Dendritic cell treated with granulocyte-macrophage colony-stimulating factor and Interleukin-4, amounts not matched to agents 40 ng/mL and 50 ng/mL, for 4 days (primary cell): ENCODE measurements at regions of chr3 and their contacts with region 1.

Region 1: GRCh38 chr3:141575879-141576743 is 89.3 kb downstream of the RASA2 start:
- H3K4me3 Mint-ChIP-seq: no peak overlapping the region
- H3K27ac Mint-ChIP-seq: no peak overlapping the region
- H3K4me1 Mint-ChIP-seq: peaks cover 5% of the 10 kb centered on the region
- H3K27me3 Mint-ChIP-seq: no peaks in the 10 kb centered on the region

Region 2: GRCh38 chr3:141192345-141192744 is 383.8 kb before region 1 on chr3:
- intact Hi-C with region 1: no loop called
- H3K4me3 Mint-ChIP-seq: no peak overlapping the region
- H3K27ac Mint-ChIP-seq: no peak overlapping the region
- H3K4me1 Mint-ChIP-seq: peaks cover 10% of the 10 kb centered on the region
- H3K27me3 Mint-ChIP-seq: peaks cover 22% of the 10 kb centered on the region

Region 3: GRCh38 chr3:141561426-141562034 is 14.6 kb before region 1 on chr3:
- intact Hi-C with region 1: no loop called
- H3K4me3 Mint-ChIP-seq: no peak overlapping the region
- H3K27ac Mint-ChIP-seq: no peak overlapping the region
- H3K4me1 Mint-ChIP-seq: no peaks in the 10 kb centered on the region
- H3K27me3 Mint-ChIP-seq: no peaks in the 10 kb centered on the region

Region 4: DNA sequence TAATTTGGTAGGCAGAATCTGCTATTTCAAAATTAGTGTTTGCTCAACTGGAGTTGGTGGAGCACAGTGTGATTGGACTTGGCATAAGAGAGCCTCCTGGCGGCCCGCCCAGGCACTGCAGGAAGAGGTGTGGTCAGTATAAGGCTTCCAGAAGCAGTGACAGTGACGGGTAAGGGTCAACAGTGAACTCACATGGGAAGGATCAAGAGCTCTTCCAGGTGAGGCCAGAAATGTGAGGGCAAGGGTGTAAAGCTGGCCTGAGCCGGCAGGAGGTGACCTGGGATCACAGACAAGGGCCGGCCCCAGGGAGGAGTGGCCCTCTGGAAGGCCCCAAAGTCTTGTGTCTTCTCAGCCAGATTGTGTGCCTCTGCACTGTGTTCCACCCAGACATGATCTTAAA is 68.8 kb after region 1 on chr3:
- intact Hi-C with region 1: loop called (anchors 5 kb)
- H3K4me3 Mint-ChIP-seq: no peak overlapping the region
- H3K27ac Mint-ChIP-seq: no peak overlapping the region
- H3K4me1 Mint-ChIP-seq: peaks cover 12% of the 10 kb centered on the region
- H3K27me3 Mint-ChIP-seq: no peaks in the 10 kb centered on the region

Region 5: DNA sequence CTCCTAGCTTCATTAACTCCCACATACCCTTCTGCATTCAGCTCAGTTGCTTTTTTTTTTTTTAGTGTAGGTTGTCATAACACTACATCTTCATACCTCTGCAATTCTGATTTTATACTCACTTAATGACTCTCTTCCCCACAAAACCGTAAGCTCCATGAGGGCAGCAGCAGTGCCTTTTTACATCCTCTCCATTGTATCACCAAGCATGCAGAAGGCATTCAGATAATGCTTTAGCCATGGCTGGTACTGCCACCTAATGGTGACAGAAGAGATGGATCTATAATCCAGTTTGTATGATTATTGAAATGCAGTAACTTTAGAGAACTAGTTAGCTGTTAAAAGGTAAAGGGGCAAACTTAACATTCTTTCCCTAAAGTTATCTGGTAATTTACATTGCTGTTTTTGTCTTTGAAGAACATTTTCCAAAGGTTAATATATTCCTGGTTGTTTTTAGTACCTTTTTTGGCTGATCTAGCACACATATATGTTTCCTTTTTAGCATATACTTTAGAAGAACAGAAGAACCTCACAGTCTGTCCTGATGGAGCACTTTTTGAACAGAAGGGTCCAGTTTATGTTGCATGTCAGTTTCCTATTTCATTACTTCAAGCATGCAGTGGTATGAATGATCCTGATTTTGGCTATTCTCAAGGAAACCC is 337.2 kb after region 1 on chr3:
- intact Hi-C with region 1: loop called (anchors 5 kb)
- H3K4me3 Mint-ChIP-seq: no peak overlapping the region
- H3K27ac Mint-ChIP-seq: no peak overlapping the region
- H3K4me1 Mint-ChIP-seq: no peaks in the 10 kb centered on the region
- H3K27me3 Mint-ChIP-seq: no peaks in the 10 kb centered on the region

Region 6: GRCh38 chr3:142098964-142099363 is 522.9 kb after region 1 on chr3:
- intact Hi-C with region 1: no loop called
- H3K4me3 Mint-ChIP-seq: no peak overlapping the region
- H3K27ac Mint-ChIP-seq: no peak overlapping the region
- H3K4me1 Mint-ChIP-seq: peaks cover 6% of the 10 kb centered on the region
- H3K27me3 Mint-ChIP-seq: no peaks in the 10 kb centered on the region